Panc1 (cell line): ENCODE measurements at regions of chr18 and their contacts with region 1.

Region 1: GRCh38 chr18:9334329-9334972 is at the start of gene TWSG1:
- DNase-seq: peak; percentile 22
- ATAC-seq: peak; percentile 95
- H3K4me3 ChIP-seq: peak within 1 kb of the TSS; percentile 78 to 81
- H3K27ac ChIP-seq: peak within 1 kb of the TSS; percentile 80
- H3K4me1 ChIP-seq: peaks cover 8% of the 10 kb centered on the region; the same call in 1 of the 2 replicates
- H3K27me3 ChIP-seq: no peaks in the 10 kb centered on the region
- CTCF ChIP-seq: peak; percentile 72
- total RNA-seq, gene TWSG1: 54.1 TPM

Region 2: DNA sequence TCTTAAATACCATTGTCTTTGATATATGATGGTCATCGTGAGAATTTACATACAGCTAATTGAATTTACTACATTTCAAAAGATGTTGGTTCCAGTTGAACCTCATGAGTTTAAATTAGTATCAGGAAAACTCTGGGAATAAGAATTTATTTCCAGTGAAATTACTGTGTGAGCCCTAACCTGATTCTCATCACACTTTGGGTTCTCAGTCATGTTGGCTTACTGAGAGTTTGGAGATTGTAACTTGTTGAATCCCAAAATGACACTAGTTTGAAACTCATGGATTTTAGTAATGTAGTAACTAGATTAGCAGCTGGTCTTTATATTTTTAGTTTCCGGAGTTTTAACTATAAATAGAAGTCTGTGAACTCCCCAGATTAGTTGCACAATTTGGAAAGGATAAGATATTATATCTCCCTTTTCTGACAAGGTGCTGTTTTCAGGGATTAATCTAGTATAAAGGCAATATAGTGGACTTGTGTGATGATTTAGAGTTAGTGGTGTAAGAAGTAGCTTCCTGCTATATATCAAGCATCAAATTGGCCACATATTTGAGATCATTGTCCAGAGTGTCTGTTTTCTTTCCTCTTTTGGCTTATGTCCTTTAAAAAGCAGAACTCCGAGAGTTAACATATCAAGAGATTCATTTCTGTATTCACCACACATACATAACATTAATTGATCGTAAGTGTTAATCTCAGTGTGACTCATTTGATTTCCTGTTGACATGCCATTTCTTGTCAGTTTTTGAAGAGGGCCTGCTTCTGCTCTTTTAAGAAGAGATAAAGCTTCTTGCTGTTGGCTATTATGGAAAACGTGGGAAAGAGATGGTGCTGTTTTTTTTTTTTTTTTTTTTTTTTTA is 216.2 kb before region 1 on chr18:
- CTCF ChIA-PET with region 1: no interaction called
- POLR2A ChIA-PET with region 1: interaction called, 20 read pairs
- in situ Hi-C with region 1: no loop called
- intact Hi-C with region 1: no loop called
- DNase-seq: no peak
- ATAC-seq: no peak
- H3K4me3 ChIP-seq: no peak overlapping the region
- H3K27ac ChIP-seq: peak overlapping the region; percentile 44
- H3K4me1 ChIP-seq: peaks cover 29% of the 10 kb centered on the region
- H3K27me3 ChIP-seq: no peaks in the 10 kb centered on the region
- CTCF ChIP-seq: no peak

Region 3: GRCh38 chr18:9147440-9148202 is 186.8 kb before region 1 on chr18:
- CTCF ChIA-PET with region 1: no interaction called
- POLR2A ChIA-PET with region 1: no interaction called
- in situ Hi-C with region 1: no loop called
- intact Hi-C with region 1: loop called (anchors 10 kb)
- DNase-seq: no peak
- ATAC-seq: peak; percentile 91
- H3K4me3 ChIP-seq: no peak overlapping the region
- H3K27ac ChIP-seq: no peak overlapping the region
- H3K4me1 ChIP-seq: peaks cover 22% of the 10 kb centered on the region
- H3K27me3 ChIP-seq: no peaks in the 10 kb centered on the region
- CTCF ChIP-seq: peak; percentile 78

Region 4: GRCh38 chr18:9348079-9348681 is 13.7 kb after region 1 on chr18:
- CTCF ChIA-PET with region 1: no interaction called
- POLR2A ChIA-PET with region 1: interaction called, 11 read pairs
- in situ Hi-C with region 1: no loop called
- intact Hi-C with region 1: no loop called
- DNase-seq: no peak
- ATAC-seq: peak; percentile 88
- H3K4me3 ChIP-seq: no peak overlapping the region
- H3K27ac ChIP-seq: peak overlapping the region; percentile 57
- H3K4me1 ChIP-seq: peaks cover 16% of the 10 kb centered on the region
- H3K27me3 ChIP-seq: no peaks in the 10 kb centered on the region
- CTCF ChIP-seq: no peak

Region 5: DNA sequence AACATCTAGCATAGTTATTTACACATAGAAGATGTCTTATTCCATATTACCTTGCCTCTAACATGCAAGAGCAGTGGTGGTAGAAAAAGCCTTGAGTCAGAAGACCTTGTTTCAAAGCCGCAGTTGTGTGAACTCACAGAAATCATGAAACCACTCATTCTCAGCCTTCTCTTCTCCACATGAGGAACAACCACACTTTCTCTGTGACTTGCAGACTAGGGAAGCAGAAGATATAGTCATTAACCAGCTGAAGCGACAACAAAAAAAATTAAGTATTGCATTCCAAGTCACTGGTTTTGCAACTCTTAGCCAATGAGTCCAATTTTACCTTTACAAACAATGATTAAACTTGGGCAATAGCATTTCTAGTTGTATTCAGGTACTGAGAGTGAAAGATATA is 19.1 kb after region 1 on chr18:
- CTCF ChIA-PET with region 1: no interaction called
- POLR2A ChIA-PET with region 1: interaction called, 11 read pairs
- in situ Hi-C with region 1: no loop called
- intact Hi-C with region 1: no loop called
- DNase-seq: no peak
- ATAC-seq: no peak
- H3K4me3 ChIP-seq: no peak overlapping the region
- H3K27ac ChIP-seq: no peak overlapping the region
- H3K4me1 ChIP-seq: peaks cover 6% of the 10 kb centered on the region; the same call in 1 of the 2 replicates
- H3K27me3 ChIP-seq: no peaks in the 10 kb centered on the region
- CTCF ChIP-seq: no peak

Region 6: GRCh38 chr18:9535382-9535991 is 201.0 kb after region 1 on chr18:
- CTCF ChIA-PET with region 1: no interaction called
- POLR2A ChIA-PET with region 1: no interaction called
- in situ Hi-C with region 1: no loop called
- intact Hi-C with region 1: no loop called
- DNase-seq: no peak
- ATAC-seq: no peak
- H3K4me3 ChIP-seq: no peak overlapping the region
- H3K27ac ChIP-seq: no peak overlapping the region
- H3K4me1 ChIP-seq: no peaks in the 10 kb centered on the region
- H3K27me3 ChIP-seq: no peaks in the 10 kb centered on the region
- CTCF ChIP-seq: no peak